Activated B cell treated with CpG ODN at 0.5 μM for 24 hours (primary cell): ENCODE measurements at regions of chr11 and their contacts with region 1.

Region 1: GRCh38 chr11:65615229-65615941 is at the start of gene PCNX3:
- DNase-seq: peak; percentile 96
- ATAC-seq: peak; percentile 90
- H3K4me3 Mint-ChIP-seq: peak within 1 kb of the TSS; percentile 97
- H3K27ac Mint-ChIP-seq: peak within 1 kb of the TSS; percentile 96
- H3K4me1 Mint-ChIP-seq: peaks cover 58% of the 10 kb centered on the region
- H3K27me3 Mint-ChIP-seq: no peaks in the 10 kb centered on the region
- CTCF ChIP-seq: no peak
- total RNA-seq, gene PCNX3: 45.3 and 51.4 TPM in 2 replicates

Region 2: GRCh38 chr11:65512306-65512705 is 103.1 kb before region 1 on chr11:
- CTCF ChIA-PET with region 1: no interaction called
- POLR2A ChIA-PET with region 1: no interaction called
- intact Hi-C with region 1: no loop called
- DNase-seq: no peak
- ATAC-seq: no peak
- H3K4me3 Mint-ChIP-seq: no peak overlapping the region
- H3K27ac Mint-ChIP-seq: no peak overlapping the region
- H3K4me1 Mint-ChIP-seq: peaks cover 25% of the 10 kb centered on the region
- H3K27me3 Mint-ChIP-seq: no peaks in the 10 kb centered on the region
- CTCF ChIP-seq: no peak

Region 3: GRCh38 chr11:65524741-65525545 is 90.4 kb before region 1 on chr11 and contains the start of gene SCYL1:
- CTCF ChIA-PET with region 1: interaction called, 3 read pairs
- POLR2A ChIA-PET with region 1: interaction called, 13 read pairs
- intact Hi-C with region 1: no loop called
- DNase-seq: peak; percentile 78
- ATAC-seq: peak; percentile 95
- H3K4me3 Mint-ChIP-seq: peak within 1 kb of the TSS; percentile 81
- H3K27ac Mint-ChIP-seq: peak within 1 kb of the TSS; percentile 66
- H3K4me1 Mint-ChIP-seq: peaks cover 47% of the 10 kb centered on the region
- H3K27me3 Mint-ChIP-seq: no peaks in the 10 kb centered on the region
- CTCF ChIP-seq: no peak
- total RNA-seq, gene SCYL1: 70.0 and 75.7 TPM in 2 replicates

Region 4: DNA sequence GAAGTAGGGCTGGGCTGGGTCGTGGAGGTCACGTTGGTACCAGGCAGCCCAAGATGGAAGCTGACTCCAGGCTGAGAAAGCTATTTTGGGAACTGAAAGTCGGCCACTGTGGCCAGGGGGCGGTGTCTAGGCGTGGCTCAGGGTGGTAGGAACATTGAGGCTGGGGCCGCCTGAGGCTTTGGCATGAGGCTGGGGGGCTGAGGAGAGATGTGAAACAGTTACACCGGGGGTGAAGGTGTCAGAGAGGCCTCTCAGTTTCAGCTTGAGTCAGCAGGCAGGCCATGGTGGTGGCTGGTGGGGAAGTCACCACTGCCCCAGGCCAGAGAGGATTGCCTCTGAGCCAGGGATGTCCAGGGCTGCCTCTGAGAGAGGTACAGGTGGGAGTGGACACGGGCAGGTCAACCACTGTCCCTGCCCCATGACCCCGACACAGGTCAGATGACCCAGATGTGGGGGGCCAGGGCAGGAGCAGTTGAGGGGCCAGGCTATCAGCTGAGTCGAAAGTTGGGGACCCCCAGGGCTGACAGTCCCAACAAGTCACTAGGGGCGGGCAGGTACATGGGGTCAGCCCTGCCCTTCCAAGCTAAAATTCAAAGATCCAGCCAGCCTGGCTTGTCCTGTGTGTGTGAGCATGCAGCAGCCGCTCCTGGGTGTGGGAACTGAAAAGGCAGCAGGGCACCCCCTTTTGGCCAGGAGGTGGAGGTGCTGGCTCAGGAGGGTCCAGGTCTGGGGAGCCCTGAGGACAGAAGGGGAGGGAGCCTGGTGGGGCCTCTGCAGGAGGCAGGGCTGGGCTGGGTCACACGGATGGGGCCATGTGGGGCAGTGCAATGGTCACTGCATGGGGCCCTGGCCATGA is 27.0 kb before region 1 on chr11:
- CTCF ChIA-PET with region 1: interaction called, 6 read pairs
- POLR2A ChIA-PET with region 1: interaction called, 44 read pairs
- intact Hi-C with region 1: loop called (anchors 1 kb)
- DNase-seq: peak; percentile 76
- ATAC-seq: peak; percentile 80
- H3K4me3 Mint-ChIP-seq: peak overlapping the region; percentile 70
- H3K27ac Mint-ChIP-seq: peak overlapping the region; percentile 96
- H3K4me1 Mint-ChIP-seq: peaks cover 44% of the 10 kb centered on the region
- H3K27me3 Mint-ChIP-seq: no peaks in the 10 kb centered on the region
- CTCF ChIP-seq: peak; percentile 38

Region 5: DNA sequence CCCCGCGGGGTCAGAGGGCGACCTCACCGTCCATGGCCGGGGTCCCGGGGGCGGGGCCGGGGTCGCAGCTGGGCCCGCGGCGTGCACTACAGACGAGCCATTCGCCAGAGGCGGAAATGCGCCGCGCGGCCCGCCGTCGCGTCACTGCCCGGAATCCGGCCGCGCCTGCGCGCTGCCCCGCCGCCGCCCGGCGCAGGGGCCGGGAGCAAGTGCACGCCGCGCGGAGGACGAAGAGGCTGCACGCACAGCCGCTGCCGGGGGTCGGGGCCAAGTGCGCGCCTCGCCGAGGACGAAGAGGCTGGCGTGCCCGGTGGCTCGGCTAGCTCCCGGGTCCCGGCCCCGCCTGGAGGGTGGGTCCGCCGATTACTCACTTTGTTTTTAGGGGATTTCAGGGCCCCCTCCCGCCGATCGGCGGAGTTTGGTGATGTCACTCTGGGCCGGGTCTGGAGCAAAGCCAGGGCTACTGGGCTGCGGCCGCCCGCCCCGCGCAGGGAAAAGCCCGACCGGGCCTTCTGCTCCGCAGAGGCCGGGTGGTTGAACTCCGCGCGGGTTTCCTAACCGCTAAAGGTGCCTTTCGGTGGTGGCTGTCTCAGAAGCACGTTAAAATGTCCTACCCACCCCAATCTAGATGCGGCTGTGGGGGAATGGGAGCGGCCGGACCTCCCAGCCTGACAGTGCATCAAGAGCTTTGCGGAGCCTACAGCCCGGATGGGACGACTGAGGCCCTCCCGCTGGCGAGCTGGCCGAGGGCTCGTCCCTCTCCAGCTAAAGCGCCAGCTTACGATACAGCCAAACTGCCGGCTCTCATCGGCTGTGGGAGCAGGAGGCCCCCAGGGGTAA is 47.6 kb after region 1 on chr11 and contains the start of gene RELA:
- CTCF ChIA-PET with region 1: interaction called, 5 read pairs
- POLR2A ChIA-PET with region 1: interaction called, 31 read pairs
- intact Hi-C with region 1: loop called (anchors 1 kb)
- DNase-seq: peak; percentile 91
- ATAC-seq: peak; percentile 87
- H3K4me3 Mint-ChIP-seq: peak within 1 kb of the TSS; percentile 87
- H3K27ac Mint-ChIP-seq: peak within 1 kb of the TSS; percentile 93
- H3K4me1 Mint-ChIP-seq: peaks cover 35% of the 10 kb centered on the region
- H3K27me3 Mint-ChIP-seq: no peaks in the 10 kb centered on the region
- CTCF ChIP-seq: no peak
- total RNA-seq, gene RELA: 110 and 119 TPM in 2 replicates

Region 6: GRCh38 chr11:66051766-66052663 is 436.6 kb after region 1 on chr11 and contains the start of gene SF3B2:
- CTCF ChIA-PET with region 1: no interaction called
- POLR2A ChIA-PET with region 1: no interaction called
- intact Hi-C with region 1: loop called (anchors 1 kb)
- DNase-seq: peak; percentile 91
- ATAC-seq: peak; percentile 97
- H3K4me3 Mint-ChIP-seq: peak within 1 kb of the TSS; percentile 99
- H3K27ac Mint-ChIP-seq: peak within 1 kb of the TSS; percentile 96
- H3K4me1 Mint-ChIP-seq: peaks cover 27% of the 10 kb centered on the region
- H3K27me3 Mint-ChIP-seq: peaks cover 8% of the 10 kb centered on the region
- CTCF ChIP-seq: no peak
- total RNA-seq, gene SF3B2: 198 and 219 TPM in 2 replicates